Naive thymus-derived CD4-positive, alpha-beta T cell (primary cell): ENCODE measurements at regions of chr15 and their contacts with region 1.

Region 1: DNA sequence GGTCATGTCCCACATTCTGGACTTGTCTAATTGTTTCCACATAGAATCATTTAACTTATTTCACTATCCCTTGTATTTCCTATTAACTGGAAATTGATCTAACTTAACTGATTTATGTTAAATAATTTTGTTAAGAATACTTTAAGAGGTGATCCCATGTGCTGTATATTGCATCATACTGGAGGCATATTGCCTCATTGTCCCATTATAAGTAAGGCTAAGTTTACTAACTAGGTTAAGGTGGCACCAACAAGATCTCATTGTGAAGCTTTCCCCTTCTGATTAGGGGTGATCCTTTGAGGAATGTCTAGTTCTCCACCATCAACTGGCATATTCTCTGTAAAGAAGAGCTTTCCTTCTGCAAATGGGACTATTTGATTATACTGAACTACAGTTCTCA is 24.4 kb downstream of the MAP1A start:
- DNase-seq: no peak
- ATAC-seq: no peak
- H3K4me3 ChIP-seq: no peak overlapping the region
- H3K4me3 Mint-ChIP-seq: no peak overlapping the region
- H3K27ac ChIP-seq: no peak overlapping the region
- H3K27ac Mint-ChIP-seq: no peak overlapping the region
- H3K4me1 ChIP-seq: no peaks in the 10 kb centered on the region
- H3K4me1 Mint-ChIP-seq: peaks cover 0 to 7% (median 4%) of the 10 kb centered on the region in 7 donors
- H3K27me3 ChIP-seq: no peaks in the 10 kb centered on the region
- H3K27me3 Mint-ChIP-seq: no peaks in the 10 kb centered on the region

Region 2: GRCh38 chr15:43465105-43465504 is 76.7 kb before region 1 on chr15:
- CTCF ChIA-PET with region 1: no interaction called
- POLR2A ChIA-PET with region 1: no interaction called
- intact Hi-C with region 1: no loop called
- DNase-seq: no peak
- ATAC-seq: no peak
- H3K4me3 ChIP-seq: no peak overlapping the region
- H3K4me3 Mint-ChIP-seq: no peak overlapping the region
- H3K27ac ChIP-seq: no peak overlapping the region
- H3K27ac Mint-ChIP-seq: peak overlapping the region in 2 of 9 donors; percentile 2 to 43
- H3K4me1 ChIP-seq: no peaks in the 10 kb centered on the region
- H3K4me1 Mint-ChIP-seq: peaks cover 0 to 3% (median 0%) of the 10 kb centered on the region in 7 donors
- H3K27me3 ChIP-seq: no peaks in the 10 kb centered on the region
- H3K27me3 Mint-ChIP-seq: no peaks in the 10 kb centered on the region

Region 3: DNA sequence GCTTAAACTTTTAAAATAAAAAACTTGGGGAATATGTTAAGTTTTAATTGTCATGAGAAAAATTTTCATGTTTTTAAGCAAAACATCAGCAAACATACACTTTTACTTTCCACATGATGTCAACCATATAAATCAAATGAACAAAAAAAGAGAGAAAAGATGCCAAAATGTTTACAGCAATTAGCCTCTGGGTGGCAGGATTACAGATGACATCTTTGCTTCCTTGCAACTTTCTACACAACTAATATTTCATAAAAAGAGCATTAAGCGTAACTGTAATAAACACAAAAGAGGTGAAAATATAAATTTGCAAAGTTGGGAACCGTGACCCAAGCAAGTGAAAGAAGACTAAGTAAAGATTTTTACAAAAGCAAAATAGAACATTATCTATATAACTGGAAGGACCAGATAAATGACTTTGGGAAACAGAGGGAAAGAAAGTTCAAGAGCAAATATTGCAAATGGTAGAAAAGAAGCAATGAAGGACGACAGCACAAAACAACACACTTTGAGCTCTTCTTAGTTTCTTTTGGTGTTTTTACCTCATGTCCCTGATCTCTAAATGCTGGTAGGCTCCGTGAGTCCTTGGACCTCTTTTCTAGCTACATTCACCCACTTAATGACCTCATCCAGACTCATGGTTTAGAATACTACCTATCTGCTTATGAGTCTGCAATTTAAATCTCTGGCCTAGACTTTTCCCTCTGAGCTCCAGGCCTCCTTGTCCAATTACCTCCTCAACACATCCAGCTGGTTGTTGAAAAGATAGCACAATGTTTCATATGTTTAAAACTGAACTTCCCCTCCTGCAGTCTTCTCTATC is 58.3 kb before region 1 on chr15:
- CTCF ChIA-PET with region 1: no interaction called
- POLR2A ChIA-PET with region 1: no interaction called
- intact Hi-C with region 1: loop called in 1 of 2 experiments (anchors 5 kb)
- DNase-seq: peak in 5 of 9 donors; percentile 17 to 50 (median 33)
- ATAC-seq: no peak
- H3K4me3 ChIP-seq: no peak overlapping the region
- H3K4me3 Mint-ChIP-seq: no peak overlapping the region
- H3K27ac ChIP-seq: no peak overlapping the region
- H3K27ac Mint-ChIP-seq: peak overlapping the region in 1 of 9 donors; percentile 12
- H3K4me1 ChIP-seq: no peaks in the 10 kb centered on the region
- H3K4me1 Mint-ChIP-seq: peaks cover 11 to 19% (median 16%) of the 10 kb centered on the region in 7 donors
- H3K27me3 ChIP-seq: no peaks in the 10 kb centered on the region
- H3K27me3 Mint-ChIP-seq: no peaks in the 10 kb centered on the region

Region 4: GRCh38 chr15:43762824-43763223 is 221.0 kb after region 1 on chr15:
- CTCF ChIA-PET with region 1: no interaction called
- POLR2A ChIA-PET with region 1: no interaction called
- intact Hi-C with region 1: no loop called
- DNase-seq: no peak
- ATAC-seq: no peak
- H3K4me3 ChIP-seq: no peak overlapping the region
- H3K4me3 Mint-ChIP-seq: no peak overlapping the region
- H3K27ac ChIP-seq: no peak overlapping the region
- H3K27ac Mint-ChIP-seq: peak overlapping the region in 1 of 9 donors; percentile 1
- H3K4me1 ChIP-seq: no peaks in the 10 kb centered on the region
- H3K4me1 Mint-ChIP-seq: peaks cover 0 to 7% (median 3%) of the 10 kb centered on the region in 7 donors
- H3K27me3 ChIP-seq: no peaks in the 10 kb centered on the region
- H3K27me3 Mint-ChIP-seq: no peaks in the 10 kb centered on the region

Region 5: DNA sequence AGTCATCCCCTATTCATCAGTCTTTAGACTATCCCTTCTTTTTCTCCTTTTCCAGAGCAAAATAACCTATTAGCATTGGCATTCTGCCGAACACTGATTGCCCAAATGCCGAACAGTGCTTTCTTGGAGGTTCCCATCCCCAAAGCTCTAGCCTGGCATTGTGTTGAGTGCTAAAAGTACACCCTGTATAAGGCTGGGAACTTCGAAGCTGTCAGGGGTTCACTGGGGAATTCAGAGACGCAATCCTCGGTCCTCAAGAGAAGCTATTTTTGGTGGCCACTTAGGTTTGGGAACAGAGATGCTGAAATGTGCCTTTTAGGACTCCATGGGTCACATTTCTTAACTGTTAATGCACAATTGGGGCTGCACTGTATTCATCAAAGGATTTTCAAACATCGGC is 644.9 kb after region 1 on chr15:
- CTCF ChIA-PET with region 1: no interaction called
- POLR2A ChIA-PET with region 1: no interaction called
- intact Hi-C with region 1: no loop called
- DNase-seq: no peak
- ATAC-seq: no peak
- H3K4me3 ChIP-seq: no peak overlapping the region
- H3K4me3 Mint-ChIP-seq: no peak overlapping the region
- H3K27ac ChIP-seq: no peak overlapping the region
- H3K27ac Mint-ChIP-seq: no peak overlapping the region
- H3K4me1 ChIP-seq: no peaks in the 10 kb centered on the region
- H3K4me1 Mint-ChIP-seq: no peaks in the 10 kb centered on the region
- H3K27me3 ChIP-seq: peaks cover 0 to 10% of the 10 kb centered on the region in 2 donors
- H3K27me3 Mint-ChIP-seq: peaks cover 11 to 27% (median 21%) of the 10 kb centered on the region in 5 donors